Activated T-helper 1 cell treated with anti-CD3 and anti-CD28 coated beads, Interleukin-12 subunit alpha, Interleukin-12 subunit beta, Interleukin-2, Interleukin-4 antibody, amounts not matched to agents 30 ng/mL and 10 ng/mL and 1 ng/mL, durations not matched to agents 14 hours and 24 hours and 36 hours (primary cell): ENCODE measurements at regions of chr11 and their contacts with region 1.

Region 1: DNA sequence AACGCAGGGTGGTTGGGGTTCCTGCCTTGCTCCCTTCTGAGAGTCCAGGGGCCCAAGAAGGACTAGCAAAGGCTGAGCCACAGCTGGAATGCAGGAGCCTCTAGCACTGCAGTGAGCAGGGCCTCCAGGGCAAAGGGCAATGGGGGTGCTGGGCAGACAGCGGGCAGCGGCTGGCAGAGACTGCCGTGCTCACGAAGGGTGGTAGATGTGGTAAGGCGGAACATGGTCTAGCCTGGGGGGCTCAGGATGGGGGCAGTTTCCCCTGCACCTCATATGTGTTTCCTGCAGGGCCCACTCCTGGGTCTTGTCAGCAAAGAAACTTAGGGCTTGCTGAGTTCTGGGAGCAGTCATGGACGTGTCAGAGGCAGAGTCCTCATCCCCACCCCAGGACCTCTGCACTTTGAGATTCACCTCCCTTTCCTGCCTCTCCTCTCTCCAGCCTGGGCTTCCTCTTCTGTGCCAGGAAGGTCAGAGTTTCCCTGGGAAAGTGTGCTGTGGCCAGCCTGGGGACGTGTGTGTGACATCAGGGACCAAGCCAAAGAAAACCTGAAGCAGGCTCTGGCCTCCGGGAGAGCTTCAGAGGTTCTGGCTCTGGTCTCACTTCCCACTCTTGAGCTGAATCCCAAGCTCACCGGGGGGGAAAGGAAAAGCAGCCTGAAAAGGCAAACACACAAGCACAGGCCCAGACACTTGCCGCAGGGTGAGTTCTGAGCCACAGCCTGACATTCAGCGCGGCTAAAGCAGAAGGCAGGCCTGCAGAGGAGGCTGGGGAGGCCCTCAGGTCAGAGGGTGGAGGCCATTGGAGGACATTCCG is 4.4 kb downstream of the MOGAT2 start:
- DNase-seq: no peak
- H3K4me3 Mint-ChIP-seq: no peak overlapping the region
- H3K27ac Mint-ChIP-seq: no peak overlapping the region
- H3K4me1 Mint-ChIP-seq: no peaks in the 10 kb centered on the region
- H3K27me3 Mint-ChIP-seq: peaks cover 2% of the 10 kb centered on the region

Region 2: DNA sequence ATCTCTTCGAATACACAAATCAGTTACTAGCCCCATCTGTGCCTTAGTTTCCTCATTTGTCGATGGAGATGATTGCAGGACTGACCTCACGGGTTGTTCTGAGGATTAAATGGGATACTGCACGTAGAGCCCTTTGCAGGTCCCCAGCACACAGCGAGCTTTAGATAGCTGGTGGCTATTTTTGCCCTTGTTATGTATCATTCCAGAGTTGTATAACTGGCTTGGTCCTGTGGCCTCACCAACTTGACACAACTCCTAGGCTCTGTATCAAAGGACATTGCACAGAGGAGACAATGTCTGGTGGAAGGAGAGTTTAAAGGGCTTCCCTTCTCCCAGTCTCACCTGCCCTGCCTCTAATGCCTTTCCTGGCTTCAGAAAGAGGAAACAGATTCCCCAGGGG is 23.7 kb after region 1 on chr11:
- intact Hi-C with region 1: no loop called
- DNase-seq: no peak
- H3K4me3 Mint-ChIP-seq: no peak overlapping the region
- H3K27ac Mint-ChIP-seq: no peak overlapping the region
- H3K4me1 Mint-ChIP-seq: no peaks in the 10 kb centered on the region
- H3K27me3 Mint-ChIP-seq: peaks cover 19% of the 10 kb centered on the region

Region 3: GRCh38 chr11:75757651-75758050 is 35.6 kb after region 1 on chr11:
- intact Hi-C with region 1: no loop called
- DNase-seq: no peak
- H3K4me3 Mint-ChIP-seq: no peak overlapping the region
- H3K27ac Mint-ChIP-seq: no peak overlapping the region
- H3K4me1 Mint-ChIP-seq: peaks cover 6% of the 10 kb centered on the region
- H3K27me3 Mint-ChIP-seq: peaks cover 5% of the 10 kb centered on the region

Region 4: DNA sequence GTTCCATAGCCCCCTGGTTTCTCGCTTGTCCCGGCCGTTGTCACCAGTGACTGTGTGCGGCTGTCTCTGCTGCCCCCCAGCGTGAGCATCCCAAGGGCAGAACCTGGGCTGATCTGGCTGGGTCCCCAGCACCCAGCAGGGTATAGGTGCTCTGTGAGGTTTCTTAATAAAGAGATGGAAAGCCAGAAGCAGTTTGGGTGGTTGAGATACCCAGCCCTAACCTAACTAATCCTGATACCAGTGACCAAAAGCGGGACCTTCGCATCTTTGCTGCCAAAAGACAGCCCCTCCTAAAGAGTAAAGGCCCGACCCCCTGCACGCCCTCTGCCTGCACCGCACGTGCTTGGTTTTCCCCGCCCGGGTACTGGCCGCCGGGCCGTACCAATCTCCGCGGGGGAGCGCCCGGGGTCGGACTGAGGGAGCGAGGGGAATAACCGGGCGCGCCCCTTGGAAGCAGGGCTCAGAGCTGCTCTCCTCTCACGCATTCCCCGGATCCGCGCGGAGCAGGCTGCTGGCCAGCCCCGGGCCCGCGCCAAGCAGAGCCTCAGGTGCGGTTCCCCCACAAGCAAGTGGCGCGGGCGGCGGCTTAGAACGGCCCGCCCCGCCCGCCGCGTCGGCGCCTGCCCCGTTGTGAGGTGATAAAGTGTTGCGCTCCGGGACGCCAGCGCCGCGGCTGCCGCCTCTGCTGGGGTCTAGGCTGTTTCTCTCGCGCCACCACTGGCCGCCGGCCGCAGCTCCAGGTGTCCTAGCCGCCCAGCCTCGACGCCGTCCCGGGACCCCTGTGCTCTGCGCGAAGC is 46.2 kb after region 1 on chr11 and contains the start of gene DGAT2:
- intact Hi-C with region 1: loop called (anchors 2 kb)
- DNase-seq: peak; percentile 69
- H3K4me3 Mint-ChIP-seq: peak within 1 kb of the TSS; percentile 81
- H3K27ac Mint-ChIP-seq: peak within 1 kb of the TSS; percentile 83
- H3K4me1 Mint-ChIP-seq: peaks cover 49% of the 10 kb centered on the region
- H3K27me3 Mint-ChIP-seq: peaks cover 18% of the 10 kb centered on the region
- total RNA-seq, gene DGAT2: 9.8 and 11.0 TPM in 2 replicates